Vagina (tissue), 2 donors: ENCODE measurements at regions of chr2 and their contacts with region 1.

Region 1: GRCh38 chr2:38264396-38265281 is 112.4 kb downstream of the ATL2 start:
- DNase-seq: no peak
- H3K4me3 ChIP-seq: no peak overlapping the region
- H3K27ac ChIP-seq: no peak overlapping the region
- H3K4me1 ChIP-seq: no peaks in the 10 kb centered on the region
- H3K27me3 ChIP-seq: no peaks in the 10 kb centered on the region
- CTCF ChIP-seq: no peak
- POLR2A ChIP-seq: no peak

Region 2: GRCh38 chr2:37776487-37776886 is 488.2 kb before region 1 on chr2:
- intact Hi-C with region 1: no loop called
- DNase-seq: no peak
- H3K4me3 ChIP-seq: no peak overlapping the region
- H3K27ac ChIP-seq: peak overlapping the region; percentile 56
- H3K4me1 ChIP-seq: peaks cover 35% of the 10 kb centered on the region
- H3K27me3 ChIP-seq: no peaks in the 10 kb centered on the region
- CTCF ChIP-seq: no peak
- POLR2A ChIP-seq: no peak

Region 3: DNA sequence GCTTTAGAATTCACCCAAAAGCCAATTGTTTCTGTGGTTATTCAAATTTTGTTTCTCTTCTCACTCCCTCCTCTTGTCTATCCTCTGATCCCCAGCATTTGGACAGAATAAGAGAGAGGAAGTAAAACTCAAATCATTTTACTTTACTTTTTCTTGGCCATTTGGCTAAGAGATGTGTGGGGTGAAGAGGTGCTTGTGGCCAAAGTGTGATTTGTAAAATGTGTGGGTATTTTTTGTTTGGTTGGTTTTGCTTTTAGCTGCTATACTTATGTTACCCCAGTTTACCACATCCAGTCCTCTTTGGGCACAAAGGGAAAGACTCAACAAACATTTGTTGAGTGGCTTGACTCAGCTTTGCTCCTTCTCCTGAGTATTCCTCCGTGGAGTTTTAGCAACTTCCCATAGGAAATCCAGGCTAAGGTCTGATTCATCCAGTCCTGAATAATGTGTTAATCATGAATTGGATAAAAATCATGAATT is 79.6 kb before region 1 on chr2:
- intact Hi-C with region 1: loop called (anchors 10 kb)
- DNase-seq: no peak
- H3K4me3 ChIP-seq: no peak overlapping the region
- H3K27ac ChIP-seq: no peak overlapping the region
- H3K4me1 ChIP-seq: peaks cover 32% of the 10 kb centered on the region
- H3K27me3 ChIP-seq: no peaks in the 10 kb centered on the region
- CTCF ChIP-seq: no peak
- POLR2A ChIP-seq: no peak